ENCODE measurements at regions of chr7 and their contacts with region 1.

Region 1: DNA sequence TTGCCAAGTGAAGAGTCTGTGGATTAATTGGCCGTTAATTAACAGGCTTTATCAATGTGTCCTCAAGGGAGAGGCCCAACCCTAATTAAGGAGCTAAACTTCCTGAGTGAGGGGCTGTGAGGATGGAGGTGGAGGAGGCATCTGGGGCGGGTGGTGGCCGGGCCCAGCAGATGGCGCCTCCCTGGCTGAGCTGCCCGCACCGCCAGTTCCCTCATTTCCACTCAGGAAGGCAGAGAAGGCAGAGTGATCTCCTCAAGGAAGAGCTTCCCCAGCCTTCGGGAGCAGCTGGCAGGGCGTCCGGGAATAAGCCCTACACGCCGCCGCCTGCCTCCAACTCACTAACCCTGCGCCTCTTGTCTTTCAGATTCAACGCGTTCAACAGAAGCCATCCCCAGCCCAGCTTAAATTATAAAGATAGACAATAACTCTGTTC is 112.2 kb downstream of the CYTH3 start:
- DNase-seq: peak; percentile 27
- H3K4me3 ChIP-seq: no peak overlapping the region
- H3K27ac ChIP-seq: no peak overlapping the region
- H3K27me3 ChIP-seq: no peaks in the 10 kb centered on the region
- CTCF ChIP-seq: peak; percentile 88

Region 2: GRCh38 chr7:5997222-5997808 is 162.9 kb before region 1 on chr7:
- CTCF ChIA-PET with region 1: interaction called, 16 read pairs
- POLR2A ChIA-PET with region 1: no interaction called
- DNase-seq: peak; percentile 32
- H3K4me3 ChIP-seq: no peak overlapping the region
- H3K27ac ChIP-seq: no peak overlapping the region
- H3K27me3 ChIP-seq: no peaks in the 10 kb centered on the region
- CTCF ChIP-seq: peak; percentile 69

Region 3: GRCh38 chr7:6260291-6261187 is 100.3 kb after region 1 on chr7:
- CTCF ChIA-PET with region 1: interaction called, 13 read pairs
- POLR2A ChIA-PET with region 1: no interaction called
- DNase-seq: no peak
- H3K4me3 ChIP-seq: no peak overlapping the region
- H3K27ac ChIP-seq: peak overlapping the region; percentile 3
- H3K27me3 ChIP-seq: no peaks in the 10 kb centered on the region
- CTCF ChIP-seq: no peak

Region 4: DNA sequence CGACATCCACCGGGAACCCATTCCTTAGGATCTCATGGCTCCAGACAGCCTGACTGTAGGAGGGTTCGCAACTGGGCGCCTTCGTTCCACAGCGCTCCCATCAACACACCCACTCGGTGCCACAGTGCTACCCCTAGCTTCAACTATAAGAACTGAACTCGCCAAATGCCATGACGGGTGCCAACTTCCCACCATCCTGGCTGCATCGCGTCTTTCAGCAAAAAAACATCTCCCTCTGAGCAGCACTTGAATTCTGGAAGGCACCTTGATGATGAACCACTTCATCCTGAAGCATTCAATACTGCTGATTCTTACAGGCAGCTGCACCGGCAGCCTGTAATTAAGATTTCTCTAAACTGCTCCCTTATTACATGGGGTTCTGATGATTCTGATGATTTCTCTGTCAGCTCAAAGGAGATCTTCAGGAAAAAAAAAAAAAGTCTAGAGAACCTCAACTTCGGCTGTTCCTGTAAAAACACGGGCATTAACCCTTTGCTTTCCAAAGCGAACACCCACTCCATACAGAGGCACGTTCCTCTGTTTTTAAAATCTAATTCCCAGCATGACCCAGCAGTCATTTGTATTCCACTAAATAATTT is 111.0 kb after region 1 on chr7:
- CTCF ChIA-PET with region 1: interaction called, 10 read pairs
- POLR2A ChIA-PET with region 1: no interaction called
- DNase-seq: no peak
- H3K4me3 ChIP-seq: peak overlapping the region; percentile 92
- H3K27ac ChIP-seq: no peak overlapping the region
- H3K27me3 ChIP-seq: no peaks in the 10 kb centered on the region
- CTCF ChIP-seq: peak; percentile 46

Region 5: DNA sequence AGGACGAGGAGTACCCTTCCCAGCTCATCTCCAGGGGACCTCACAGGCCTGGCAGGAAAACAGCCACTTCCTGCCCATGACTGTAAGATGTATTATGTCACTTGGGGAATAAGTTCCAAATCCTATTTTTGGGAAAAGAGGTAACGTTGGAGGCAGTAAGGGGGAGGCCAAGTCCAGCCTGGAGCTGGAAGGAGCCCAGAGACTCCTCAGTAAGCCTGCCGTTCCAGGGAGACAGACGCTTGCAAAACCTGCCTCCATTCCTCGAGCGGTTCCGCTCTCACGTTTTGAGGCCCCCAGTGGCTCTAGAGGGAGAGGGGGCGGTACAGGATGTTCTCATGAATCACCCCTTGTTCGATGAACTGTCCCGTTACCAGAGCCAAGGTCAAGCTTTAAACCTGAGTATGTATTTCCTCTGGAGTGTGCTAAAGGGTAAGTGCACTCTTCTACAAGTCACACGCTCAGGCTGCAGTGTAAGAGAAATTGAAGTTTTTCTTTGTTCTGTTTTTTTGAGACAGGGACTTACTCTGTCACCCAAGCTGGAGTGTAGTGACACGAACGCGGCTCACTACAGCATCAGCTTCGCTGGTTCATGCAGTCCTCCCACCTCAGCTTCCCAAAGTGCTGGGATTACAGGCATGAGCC is 157.7 kb after region 1 on chr7:
- CTCF ChIA-PET with region 1: interaction called, 216 read pairs
- POLR2A ChIA-PET with region 1: no interaction called
- DNase-seq: no peak
- H3K4me3 ChIP-seq: no peak overlapping the region
- H3K27ac ChIP-seq: peak overlapping the region; percentile 31
- H3K27me3 ChIP-seq: no peaks in the 10 kb centered on the region
- CTCF ChIP-seq: no peak

Region 6: GRCh38 chr7:6330657-6331056 is 170.4 kb after region 1 on chr7:
- CTCF ChIA-PET with region 1: interaction called, 216 read pairs
- POLR2A ChIA-PET with region 1: no interaction called
- DNase-seq: no peak
- H3K4me3 ChIP-seq: no peak overlapping the region
- H3K27ac ChIP-seq: no peak overlapping the region
- H3K27me3 ChIP-seq: no peaks in the 10 kb centered on the region
- CTCF ChIP-seq: no peak

Region 7: GRCh38 chr7:6350433-6351058 is 190.3 kb after region 1 on chr7:
- CTCF ChIA-PET with region 1: interaction called, 27 read pairs
- POLR2A ChIA-PET with region 1: no interaction called
- DNase-seq: peak; percentile 18
- H3K4me3 ChIP-seq: no peak overlapping the region
- H3K27ac ChIP-seq: no peak overlapping the region
- H3K27me3 ChIP-seq: peaks cover 4% of the 10 kb centered on the region
- CTCF ChIP-seq: no peak

Region 8: GRCh38 chr7:6536262-6537260 is 376.4 kb after region 1 on chr7:
- CTCF ChIA-PET with region 1: no interaction called
- POLR2A ChIA-PET with region 1: no interaction called
- DNase-seq: no peak
- H3K4me3 ChIP-seq: no peak overlapping the region
- H3K27ac ChIP-seq: no peak overlapping the region
- H3K27me3 ChIP-seq: peaks cover 39% of the 10 kb centered on the region
- CTCF ChIP-seq: no peak